HCT116 (cell line): ENCODE measurements at regions of chr10 and their contacts with region 1.

Region 1: DNA sequence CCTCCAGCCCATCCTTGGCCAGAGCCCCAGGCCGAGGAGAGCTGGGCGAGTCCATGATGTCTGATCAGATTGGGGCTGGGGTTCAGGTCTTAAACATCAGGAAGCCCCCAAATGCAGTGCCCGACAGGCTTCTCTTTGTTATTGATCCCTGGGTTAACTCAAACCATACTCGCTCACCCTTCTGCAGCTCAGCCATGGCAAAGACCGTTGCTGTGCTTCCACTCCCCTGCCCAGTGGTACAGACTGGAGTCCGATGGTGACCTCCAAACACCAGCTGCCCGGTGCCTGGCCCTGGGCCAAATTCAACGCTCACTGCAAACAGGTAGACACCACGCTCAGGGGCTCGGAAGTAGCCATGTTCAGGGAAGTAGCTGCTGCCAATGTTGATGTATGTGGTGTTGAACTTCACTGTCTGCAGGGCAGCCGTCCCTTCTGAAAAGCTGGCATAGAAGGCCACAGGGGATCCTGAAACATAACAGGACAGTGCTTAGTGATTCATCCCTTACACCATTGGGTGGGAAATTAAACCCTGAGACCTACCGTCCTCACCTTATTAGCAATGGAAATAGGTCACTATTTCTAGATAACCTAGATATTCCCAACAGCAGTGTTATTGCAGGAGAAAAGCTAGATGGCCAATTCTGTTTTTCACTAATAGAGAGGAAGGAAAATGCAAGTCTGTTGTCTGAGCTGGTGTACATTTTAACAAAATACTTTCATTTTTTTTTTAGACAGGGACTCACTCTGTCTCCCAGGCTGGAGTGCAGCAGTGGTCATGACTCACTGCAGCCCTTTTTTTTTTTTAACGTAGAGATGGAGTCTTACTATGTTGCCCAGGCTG is 20.5 kb downstream of the MMRN2 start:
- DNase-seq: no peak
- ATAC-seq: no peak
- H3K4me3 ChIP-seq: no peak overlapping the region
- H3K27ac ChIP-seq: no peak overlapping the region
- H3K4me1 ChIP-seq: peaks cover 0 to 10% of the 10 kb centered on the region in 2 experiments; a peak in 3 of 4 replicates
- H3K27me3 ChIP-seq: no peaks in the 10 kb centered on the region
- CTCF ChIP-seq: no peak
- POLR2A ChIP-seq: no peak
- RAD21 ChIP-seq: no peak

Region 2: DNA sequence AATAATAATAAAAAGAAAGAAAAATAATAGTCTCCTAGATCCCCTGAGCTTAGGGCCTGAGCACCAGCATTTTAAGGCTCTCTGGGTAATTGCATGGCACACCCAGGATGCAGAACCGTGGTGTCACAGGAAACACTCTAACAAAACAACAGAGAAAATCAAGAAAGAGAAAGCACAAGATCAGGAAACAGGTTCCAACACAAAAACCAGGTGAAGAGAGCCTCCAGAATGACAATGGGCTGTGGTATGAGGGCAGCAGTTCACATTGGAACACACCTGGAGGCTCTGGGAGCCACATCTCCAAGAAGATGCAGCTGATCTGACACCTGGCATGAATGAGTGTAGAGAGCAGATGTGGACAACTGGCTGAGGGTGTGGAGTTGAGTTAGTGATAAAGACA is 13.5 kb after region 1 on chr10:
- CTCF ChIA-PET with region 1: no interaction called
- POLR2A ChIA-PET with region 1: no interaction called
- RAD21 ChIA-PET with region 1: no interaction called
- intact Hi-C with region 1: no loop called
- DNase-seq: no peak
- ATAC-seq: no peak
- H3K4me3 ChIP-seq: no peak overlapping the region
- H3K27ac ChIP-seq: no peak overlapping the region
- H3K4me1 ChIP-seq: peaks cover 10 to 27% of the 10 kb centered on the region in 2 experiments; a peak in 3 of 4 replicates
- H3K27me3 ChIP-seq: no peaks in the 10 kb centered on the region
- CTCF ChIP-seq: no peak
- POLR2A ChIP-seq: no peak
- RAD21 ChIP-seq: no peak

Region 3: DNA sequence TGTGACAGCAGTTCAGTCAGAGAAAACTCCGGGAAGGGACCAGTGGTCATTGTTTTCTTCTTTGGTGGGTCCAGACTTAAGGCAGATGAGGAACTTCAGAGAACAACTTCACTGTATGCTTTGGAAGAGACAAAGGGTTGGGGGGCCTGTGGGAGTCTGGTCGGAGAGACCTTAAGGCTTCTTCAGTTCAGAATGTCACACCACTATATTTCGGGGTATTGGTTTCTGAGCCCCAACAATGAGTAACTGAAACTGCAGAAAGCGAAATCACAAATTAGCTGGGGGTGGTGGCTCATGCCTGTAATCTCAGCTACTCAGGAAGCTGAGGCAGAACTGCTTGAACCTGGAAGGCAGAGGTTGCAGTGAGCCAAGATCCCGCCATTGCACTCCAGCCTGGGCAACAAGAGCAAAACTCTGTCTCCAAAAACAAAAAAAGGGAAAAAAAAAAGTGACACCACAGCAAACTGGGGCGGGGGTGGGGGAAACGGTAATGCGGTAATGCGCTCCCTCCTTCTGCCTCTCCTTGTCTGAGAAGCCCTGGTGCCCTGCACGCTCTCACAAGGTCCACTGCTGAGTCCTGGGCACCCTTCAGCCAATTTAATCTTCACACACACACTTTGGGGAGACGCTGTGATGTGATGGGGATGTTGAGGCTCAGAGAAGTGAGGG is 29.2 kb after region 1 on chr10:
- CTCF ChIA-PET with region 1: interaction called, 10 read pairs
- POLR2A ChIA-PET with region 1: interaction called, 3 read pairs
- RAD21 ChIA-PET with region 1: interaction called in 1 of 2 experiments, 3 read pairs
- intact Hi-C with region 1: loop called (anchors 2 kb)
- DNase-seq: no peak
- ATAC-seq: no peak
- H3K4me3 ChIP-seq: no peak overlapping the region; a peak in 1 of 4 replicates
- H3K27ac ChIP-seq: peak overlapping the region; percentile 95
- H3K4me1 ChIP-seq: peaks cover 47 to 82% of the 10 kb centered on the region in 2 experiments
- H3K27me3 ChIP-seq: no peaks in the 10 kb centered on the region
- CTCF ChIP-seq: no peak
- POLR2A ChIP-seq: no peak
- RAD21 ChIP-seq: no peak